AG04449 (cell line): ENCODE measurements at regions of chr22 and their contacts with region 1.

Region 1: DNA sequence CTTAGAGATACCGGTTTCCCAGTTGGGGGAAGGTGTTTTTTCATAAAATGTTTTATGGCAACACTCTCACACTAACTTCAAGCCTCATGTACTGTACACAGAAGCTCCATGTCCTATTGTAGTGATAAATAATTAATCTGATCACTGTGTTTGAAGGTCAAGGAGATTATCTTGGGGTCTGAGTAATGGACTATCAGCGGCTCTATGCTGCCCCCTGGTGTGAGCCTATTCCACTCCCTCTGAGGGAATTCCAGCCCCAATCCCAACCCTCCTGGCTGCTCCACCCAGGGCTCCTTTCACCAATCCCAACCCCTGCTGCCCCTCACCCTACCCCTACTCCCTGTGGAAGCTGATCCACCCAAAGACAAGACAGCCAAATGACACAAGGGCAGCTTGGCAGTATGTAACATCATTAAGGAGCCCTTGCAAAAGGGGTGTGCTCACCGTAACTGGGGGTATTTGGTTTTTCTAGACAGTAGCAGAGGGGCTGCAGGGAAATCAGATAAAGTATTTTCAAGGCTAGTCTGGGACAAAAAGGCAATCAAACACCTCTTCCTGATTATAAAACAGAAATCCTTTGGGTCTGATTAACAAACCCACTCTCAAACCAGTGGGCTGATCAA is 22.3 kb downstream of the HPS4 start:
- DNase-seq: no peak
- H3K4me3 ChIP-seq: no peak overlapping the region
- CTCF ChIP-seq: peak; percentile 75

Region 2: GRCh38 chr22:26364066-26365015 is 97.0 kb before region 1 on chr22:
- CTCF ChIA-PET with region 1: interaction called, 289 read pairs
- POLR2A ChIA-PET with region 1: no interaction called
- DNase-seq: no peak
- H3K4me3 ChIP-seq: no peak overlapping the region
- CTCF ChIP-seq: peak; percentile 71

Region 3: GRCh38 chr22:26385164-26385563 is 76.1 kb before region 1 on chr22:
- CTCF ChIA-PET with region 1: interaction called, 40 read pairs
- POLR2A ChIA-PET with region 1: no interaction called
- DNase-seq: no peak
- H3K4me3 ChIP-seq: no peak overlapping the region
- CTCF ChIP-seq: no peak

Region 4: GRCh38 chr22:26409719-26410335 is 51.5 kb before region 1 on chr22:
- CTCF ChIA-PET with region 1: interaction called, 399 read pairs
- POLR2A ChIA-PET with region 1: no interaction called
- DNase-seq: no peak
- H3K4me3 ChIP-seq: no peak overlapping the region
- CTCF ChIP-seq: no peak

Region 5: GRCh38 chr22:26428515-26429457 is 32.5 kb before region 1 on chr22 and contains the start of gene ASPHD2:
- CTCF ChIA-PET with region 1: interaction called, 38 read pairs
- POLR2A ChIA-PET with region 1: no interaction called
- DNase-seq: no peak
- H3K4me3 ChIP-seq: peak within 1 kb of the TSS; percentile 69
- CTCF ChIP-seq: no peak

Region 6: DNA sequence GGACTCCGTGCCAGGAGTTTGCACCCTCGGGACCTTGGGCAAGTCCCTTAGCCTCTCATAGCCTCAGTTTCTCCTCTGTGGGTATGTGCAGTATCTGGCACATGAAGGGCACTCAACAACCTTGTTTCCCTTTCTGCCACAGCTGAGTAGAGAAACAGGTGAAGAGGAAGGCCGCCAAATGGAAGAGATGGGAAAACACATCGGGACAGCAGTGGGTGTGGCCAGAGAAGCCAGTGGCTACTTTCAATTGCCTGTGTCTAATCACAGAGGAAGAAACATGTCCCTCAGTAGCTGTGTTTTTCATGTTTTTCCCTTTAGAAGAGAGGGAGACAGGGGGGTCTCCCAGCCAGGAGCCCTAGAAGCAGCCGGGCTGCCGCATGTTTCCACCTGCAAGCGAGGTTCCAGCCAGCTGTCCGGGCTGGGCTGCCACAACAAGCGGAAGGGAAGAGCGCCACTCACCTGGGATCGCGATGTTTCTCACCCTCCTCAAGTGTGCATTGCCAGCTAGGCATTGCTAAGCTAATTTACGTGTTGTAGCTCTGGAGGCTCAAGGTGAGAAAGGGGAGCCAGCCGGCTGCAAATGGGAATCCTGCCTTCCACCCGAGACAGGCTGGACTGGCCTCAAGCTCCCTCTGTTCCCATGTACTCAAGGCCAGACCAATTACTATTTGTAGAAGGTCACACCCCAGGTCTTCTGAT is 15.6 kb before region 1 on chr22:
- CTCF ChIA-PET with region 1: interaction called, 86 read pairs
- POLR2A ChIA-PET with region 1: no interaction called
- DNase-seq: no peak
- H3K4me3 ChIP-seq: no peak overlapping the region
- CTCF ChIP-seq: no peak

Region 7: GRCh38 chr22:26483439-26484359 is 22.4 kb after region 1 on chr22 and contains the starts of genes HPS4 and SRRD:
- CTCF ChIA-PET with region 1: interaction called, 24 read pairs
- POLR2A ChIA-PET with region 1: no interaction called
- DNase-seq: peak; percentile 46
- H3K4me3 ChIP-seq: peak within 1 kb of the TSS; percentile 92
- CTCF ChIP-seq: no peak